ENCODE measurements at regions of chr17 and their contacts with region 1.

Region 1: DNA sequence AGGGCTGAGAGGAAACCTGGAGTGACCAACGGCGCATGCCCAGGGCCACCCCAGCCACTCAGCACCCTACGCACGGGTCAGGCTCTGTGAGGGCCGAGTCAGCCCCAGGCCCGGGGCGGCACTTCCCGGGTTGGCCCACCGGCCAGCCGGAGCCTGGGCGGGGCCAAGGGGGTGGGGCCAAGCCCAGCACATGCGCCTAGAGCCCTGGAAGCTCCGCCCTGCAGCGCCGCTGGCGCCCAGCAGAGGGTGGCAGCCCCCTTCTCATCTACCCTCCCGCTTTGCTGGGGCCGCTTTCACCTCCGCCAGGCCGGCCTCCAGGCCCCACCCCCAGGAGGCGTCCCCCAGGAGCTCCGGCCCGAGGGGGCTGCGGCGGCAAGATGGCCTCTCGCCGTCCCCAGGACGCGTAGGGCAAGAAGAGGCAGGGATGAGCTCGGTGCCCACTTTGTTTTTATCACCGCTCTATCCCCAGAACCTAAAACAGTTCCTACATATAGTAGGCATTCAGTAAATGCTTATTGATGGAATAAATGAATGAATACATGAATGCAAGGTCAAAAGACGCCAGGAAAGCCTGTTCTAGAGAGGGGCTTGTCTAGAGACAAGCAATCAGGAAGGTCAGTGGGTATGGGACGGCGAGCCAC is 31.3 kb downstream of the MYO18A start:
- DNase-seq: peak; percentile 89
- H3K4me3 ChIP-seq: peak overlapping the region; percentile 40 to 41
- H3K27ac ChIP-seq: peak overlapping the region; percentile 68 to 74
- H3K4me1 ChIP-seq: peaks cover 6% of the 10 kb centered on the region
- H3K27me3 ChIP-seq: no peaks in the 10 kb centered on the region
- CTCF ChIP-seq: peak; percentile 74 to 99 (median 96)
- POLR2A ChIP-seq: peak; percentile 37

Region 2: GRCh38 chr17:27403480-27404005 is 1745.4 kb before region 1 on chr17:
- intact Hi-C with region 1: no loop called
- DNase-seq: no peak
- H3K4me3 ChIP-seq: no peak overlapping the region
- H3K27ac ChIP-seq: no peak overlapping the region
- H3K4me1 ChIP-seq: no peaks in the 10 kb centered on the region
- H3K27me3 ChIP-seq: no peaks in the 10 kb centered on the region
- CTCF ChIP-seq: no peak
- POLR2A ChIP-seq: no peak

Region 3: GRCh38 chr17:29180034-29180787 is 31.3 kb after region 1 on chr17 and contains the start of gene MYO18A:
- intact Hi-C with region 1: loop called (anchors 2 kb)
- DNase-seq: peak; percentile 64
- H3K4me3 ChIP-seq: peak within 1 kb of the TSS; percentile 44 to 49
- H3K27ac ChIP-seq: peak within 1 kb of the TSS; percentile 82 to 88
- H3K4me1 ChIP-seq: peaks cover 10% of the 10 kb centered on the region
- H3K27me3 ChIP-seq: no peaks in the 10 kb centered on the region
- CTCF ChIP-seq: peak; percentile 51 to 98 (median 82)
- POLR2A ChIP-seq: peak; percentile 49
- total RNA-seq, gene MYO18A: 34.6 to 80.5 TPM

Region 4: DNA sequence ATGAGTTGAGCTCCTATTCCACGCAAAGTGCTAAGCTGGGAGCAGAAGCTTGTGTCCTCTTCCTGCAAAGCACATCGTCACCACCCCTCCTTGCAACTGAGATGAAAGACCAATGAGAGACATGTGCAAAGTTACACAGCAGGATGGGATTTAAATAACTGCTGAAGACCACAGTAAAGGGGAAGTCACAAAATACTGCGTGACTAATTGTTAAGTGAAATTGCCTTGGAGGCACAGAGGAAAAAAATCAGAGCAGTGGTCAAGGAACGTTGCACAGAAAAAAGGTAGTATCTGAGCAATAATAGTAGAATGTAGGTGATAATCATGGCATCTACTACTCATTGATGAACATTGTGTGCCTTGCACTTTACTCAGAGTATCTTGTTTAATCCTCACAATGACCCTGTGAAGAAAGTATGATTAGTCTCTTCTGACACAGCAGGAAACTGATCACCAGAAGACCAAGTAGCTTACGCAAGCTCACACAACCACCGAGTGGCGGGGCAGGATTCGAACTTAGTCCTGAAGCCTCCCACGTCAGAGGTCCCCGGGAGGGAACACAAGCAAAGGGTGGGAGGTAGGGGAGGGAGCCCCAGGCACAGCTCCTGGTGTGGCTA is 46.7 kb after region 1 on chr17:
- intact Hi-C with region 1: no loop called
- DNase-seq: no peak
- H3K4me3 ChIP-seq: no peak overlapping the region
- H3K27ac ChIP-seq: no peak overlapping the region
- H3K4me1 ChIP-seq: no peaks in the 10 kb centered on the region
- H3K27me3 ChIP-seq: no peaks in the 10 kb centered on the region
- CTCF ChIP-seq: no peak
- POLR2A ChIP-seq: no peak

Region 5: GRCh38 chr17:29209073-29209472 is 60.2 kb after region 1 on chr17:
- intact Hi-C with region 1: no loop called
- DNase-seq: no peak
- H3K4me3 ChIP-seq: no peak overlapping the region
- H3K27ac ChIP-seq: no peak overlapping the region
- H3K4me1 ChIP-seq: no peaks in the 10 kb centered on the region
- H3K27me3 ChIP-seq: no peaks in the 10 kb centered on the region
- CTCF ChIP-seq: no peak
- POLR2A ChIP-seq: no peak

Region 6: GRCh38 chr17:29219378-29220047 is 70.6 kb after region 1 on chr17:
- intact Hi-C with region 1: loop called (anchors 2 kb)
- DNase-seq: peak; percentile 69
- H3K4me3 ChIP-seq: no peak overlapping the region
- H3K27ac ChIP-seq: no peak overlapping the region
- H3K4me1 ChIP-seq: no peaks in the 10 kb centered on the region
- H3K27me3 ChIP-seq: no peaks in the 10 kb centered on the region
- CTCF ChIP-seq: peak; percentile 57 to 93 (median 87)
- POLR2A ChIP-seq: no peak

Region 7: GRCh38 chr17:29263916-29264315 is 115.0 kb after region 1 on chr17:
- intact Hi-C with region 1: no loop called
- DNase-seq: no peak
- H3K4me3 ChIP-seq: no peak overlapping the region
- H3K27ac ChIP-seq: no peak overlapping the region
- H3K4me1 ChIP-seq: no peaks in the 10 kb centered on the region
- H3K27me3 ChIP-seq: no peaks in the 10 kb centered on the region
- CTCF ChIP-seq: no peak
- POLR2A ChIP-seq: no peak

Region 8: DNA sequence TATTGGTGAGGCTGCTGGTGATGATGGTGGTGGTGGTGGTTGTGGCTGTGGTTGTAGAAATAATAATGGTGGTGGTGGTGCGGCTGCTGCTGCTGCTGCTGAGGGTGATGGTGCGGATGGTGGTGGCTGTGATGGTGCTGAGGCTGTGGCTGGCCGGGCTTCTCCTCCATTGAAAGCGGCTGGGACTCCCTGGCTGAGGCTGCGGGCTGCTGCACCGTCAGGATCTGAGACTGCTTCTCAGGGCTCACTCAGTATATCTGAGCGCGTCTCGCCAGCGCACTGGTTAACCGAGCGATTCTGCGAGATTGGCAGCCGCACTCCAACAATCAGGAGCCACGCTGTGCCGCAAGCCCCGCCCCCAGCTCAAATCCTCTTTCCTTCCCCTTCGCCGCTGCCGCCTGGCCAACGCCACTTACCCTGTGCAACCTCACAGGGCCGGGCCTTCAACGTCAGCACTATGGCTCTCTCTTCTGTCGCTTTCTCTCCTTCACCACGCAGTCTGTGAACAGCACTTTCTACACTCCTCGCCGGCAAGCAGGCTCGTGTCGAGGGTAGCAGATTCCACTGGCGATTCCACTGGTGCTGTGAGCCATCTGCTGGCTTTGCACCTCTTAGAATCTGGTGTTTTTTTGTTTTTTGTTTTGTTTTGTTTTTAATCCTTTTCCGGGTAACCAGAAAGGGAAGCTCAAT is 145.1 kb after region 1 on chr17 and contains the start of gene NUFIP2:
- intact Hi-C with region 1: loop called (anchors 2 kb)
- DNase-seq: peak; percentile 100
- H3K4me3 ChIP-seq: peak within 1 kb of the TSS; percentile 72 to 92
- H3K27ac ChIP-seq: peak within 1 kb of the TSS; percentile 92 to 99
- H3K4me1 ChIP-seq: peaks cover 6% of the 10 kb centered on the region
- H3K27me3 ChIP-seq: no peaks in the 10 kb centered on the region
- CTCF ChIP-seq: peak in 3 of 4 experiments; percentile 6 to 30 (median 13)
- POLR2A ChIP-seq: peak; percentile 100
- total RNA-seq, gene NUFIP2: 21.1 to 30.6 TPM

Measured in prostate gland (tissue), 2 donors.